ENCODE measurements at regions of chrX and their contacts with region 1.

Region 1: GRCh38 chrX:97743014-97743413 is 859.3 kb downstream of the RPA4 start:
- DNase-seq: no peak
- H3K4me3 ChIP-seq: no peak overlapping the region
- H3K27ac ChIP-seq: no peak overlapping the region
- H3K4me1 ChIP-seq: no peaks in the 10 kb centered on the region
- H3K27me3 ChIP-seq: no peaks in the 10 kb centered on the region
- CTCF ChIP-seq: peak in 1 of 2 donors; percentile 13
- POLR2A ChIP-seq: no peak

Region 2: GRCh38 chrX:96770315-96770714 is 972.7 kb before region 1 on chrX:
- CTCF ChIA-PET with region 1: interaction called, 3 read pairs
- POLR2A ChIA-PET with region 1: no interaction called
- dilution Hi-C with region 1: no loop called
- intact Hi-C with region 1: loop called (anchors 10 kb)
- DNase-seq: peak; percentile 9
- H3K4me3 ChIP-seq: no peak overlapping the region
- H3K27ac ChIP-seq: no peak overlapping the region
- H3K4me1 ChIP-seq: no peaks in the 10 kb centered on the region
- H3K27me3 ChIP-seq: no peaks in the 10 kb centered on the region
- CTCF ChIP-seq: peak in 1 of 2 donors; percentile 5
- POLR2A ChIP-seq: no peak

Region 3: DNA sequence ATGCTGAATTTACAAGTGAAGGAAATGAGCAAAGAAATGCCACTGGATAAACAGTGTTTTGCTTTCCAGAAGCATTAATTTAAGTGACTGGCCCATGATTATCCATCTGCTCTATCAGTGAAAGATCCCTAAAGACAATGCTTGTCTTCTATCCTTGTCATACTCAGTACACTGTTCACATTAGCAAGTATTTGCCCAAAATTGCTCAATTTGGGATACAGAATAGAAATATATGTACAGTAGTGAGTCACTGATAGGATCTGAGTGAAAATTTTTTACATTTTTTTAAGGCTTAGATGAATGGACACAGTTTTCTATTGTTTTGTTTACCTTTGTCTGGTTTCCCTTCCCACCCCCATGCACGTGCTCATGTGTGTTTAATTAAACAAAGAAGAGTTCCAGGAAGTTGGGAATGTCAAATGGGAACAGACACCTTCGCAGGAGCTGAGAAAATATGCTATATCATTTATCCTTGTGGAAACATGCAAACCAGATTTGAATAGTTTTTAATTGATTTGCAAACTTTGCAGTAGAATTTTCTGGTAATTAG is 203.0 kb before region 1 on chrX:
- CTCF ChIA-PET with region 1: no interaction called
- POLR2A ChIA-PET with region 1: no interaction called
- dilution Hi-C with region 1: no loop called
- intact Hi-C with region 1: no loop called
- DNase-seq: peak; percentile 44
- H3K4me3 ChIP-seq: no peak overlapping the region
- H3K27ac ChIP-seq: no peak overlapping the region
- H3K4me1 ChIP-seq: peaks cover 18% of the 10 kb centered on the region
- H3K27me3 ChIP-seq: no peaks in the 10 kb centered on the region
- CTCF ChIP-seq: no peak
- POLR2A ChIP-seq: no peak

Region 4: GRCh38 chrX:97629597-97629985 is 113.4 kb before region 1 on chrX:
- CTCF ChIA-PET with region 1: no interaction called
- POLR2A ChIA-PET with region 1: no interaction called
- dilution Hi-C with region 1: no loop called
- intact Hi-C with region 1: no loop called
- DNase-seq: no peak
- H3K4me3 ChIP-seq: no peak overlapping the region
- H3K27ac ChIP-seq: no peak overlapping the region
- H3K4me1 ChIP-seq: no peaks in the 10 kb centered on the region
- H3K27me3 ChIP-seq: no peaks in the 10 kb centered on the region
- CTCF ChIP-seq: no peak
- POLR2A ChIP-seq: no peak

Region 5: GRCh38 chrX:98263135-98263534 is 520.1 kb after region 1 on chrX:
- CTCF ChIA-PET with region 1: no interaction called
- POLR2A ChIA-PET with region 1: no interaction called
- dilution Hi-C with region 1: no loop called
- intact Hi-C with region 1: no loop called
- DNase-seq: no peak
- H3K4me3 ChIP-seq: no peak overlapping the region
- H3K27ac ChIP-seq: no peak overlapping the region
- H3K4me1 ChIP-seq: no peaks in the 10 kb centered on the region
- H3K27me3 ChIP-seq: no peaks in the 10 kb centered on the region
- CTCF ChIP-seq: no peak
- POLR2A ChIP-seq: no peak

Measured in endothelial cell of umbilical vein (primary cell).